Head of caudate nucleus (tissue), 42 donors: ENCODE measurements at regions of chr19 and their contacts with region 1.

Region 1: GRCh38 chr19:50933640-50934039 is 19.2 kb downstream of the KLK5 start:
- DNase-seq: no peak

Region 2: GRCh38 chr19:50851620-50852019 is 82.0 kb before region 1 on chr19:
- intact Hi-C with region 1: no loop called
- DNase-seq: no peak

Region 3: GRCh38 chr19:50882183-50882582 is 51.5 kb before region 1 on chr19:
- intact Hi-C with region 1: no loop called
- DNase-seq: no peak

Region 4: DNA sequence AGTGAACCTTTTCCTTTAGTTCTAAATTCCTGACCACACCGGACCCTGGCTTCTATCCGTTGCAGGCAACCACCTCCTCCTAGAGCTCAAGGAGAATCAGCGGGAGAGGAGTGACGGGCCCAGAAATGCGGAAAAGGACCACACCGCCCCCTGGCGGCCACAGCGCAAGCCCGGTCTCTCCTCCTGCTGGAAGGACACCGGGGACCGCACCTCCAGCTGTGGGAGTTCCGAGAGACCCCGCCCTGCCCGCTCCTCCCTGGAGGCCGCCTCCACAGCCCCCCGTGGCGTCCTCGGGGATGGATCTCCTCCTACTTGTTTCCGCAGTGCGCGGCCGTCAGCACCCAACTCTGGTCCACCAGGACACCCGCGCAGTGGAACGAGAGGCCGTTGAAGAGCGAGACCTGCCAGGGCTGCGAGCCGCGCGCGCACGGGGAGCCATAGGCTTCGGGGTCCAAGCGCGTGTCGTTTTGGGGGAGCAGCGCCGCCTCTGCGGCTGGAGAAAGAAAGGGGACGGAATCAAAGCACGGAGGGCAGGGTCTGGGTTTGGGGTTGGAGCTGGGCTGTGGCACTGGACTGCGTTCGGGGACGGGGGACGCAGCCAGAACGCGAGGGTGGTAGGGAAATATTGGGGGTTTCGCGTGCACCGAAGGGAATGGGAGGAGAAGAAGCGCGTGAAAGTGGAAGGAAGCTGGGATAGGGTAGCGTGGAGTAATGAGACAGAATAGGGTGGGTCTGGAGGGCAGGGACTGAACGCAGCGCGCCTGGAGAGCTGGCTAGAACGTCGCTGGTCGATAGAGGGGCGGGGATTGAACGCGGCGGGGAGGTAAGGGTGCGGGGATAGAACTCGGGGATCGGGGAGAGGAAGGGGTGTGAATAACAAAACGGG is 83.4 kb after region 1 on chr19:
- intact Hi-C with region 1: loop called (anchors 5 kb)
- DNase-seq: peak; percentile 1 to 94 (median 76)